H1 (cell line): ENCODE measurements at regions of chr9 and their contacts with region 1.

Region 1: DNA sequence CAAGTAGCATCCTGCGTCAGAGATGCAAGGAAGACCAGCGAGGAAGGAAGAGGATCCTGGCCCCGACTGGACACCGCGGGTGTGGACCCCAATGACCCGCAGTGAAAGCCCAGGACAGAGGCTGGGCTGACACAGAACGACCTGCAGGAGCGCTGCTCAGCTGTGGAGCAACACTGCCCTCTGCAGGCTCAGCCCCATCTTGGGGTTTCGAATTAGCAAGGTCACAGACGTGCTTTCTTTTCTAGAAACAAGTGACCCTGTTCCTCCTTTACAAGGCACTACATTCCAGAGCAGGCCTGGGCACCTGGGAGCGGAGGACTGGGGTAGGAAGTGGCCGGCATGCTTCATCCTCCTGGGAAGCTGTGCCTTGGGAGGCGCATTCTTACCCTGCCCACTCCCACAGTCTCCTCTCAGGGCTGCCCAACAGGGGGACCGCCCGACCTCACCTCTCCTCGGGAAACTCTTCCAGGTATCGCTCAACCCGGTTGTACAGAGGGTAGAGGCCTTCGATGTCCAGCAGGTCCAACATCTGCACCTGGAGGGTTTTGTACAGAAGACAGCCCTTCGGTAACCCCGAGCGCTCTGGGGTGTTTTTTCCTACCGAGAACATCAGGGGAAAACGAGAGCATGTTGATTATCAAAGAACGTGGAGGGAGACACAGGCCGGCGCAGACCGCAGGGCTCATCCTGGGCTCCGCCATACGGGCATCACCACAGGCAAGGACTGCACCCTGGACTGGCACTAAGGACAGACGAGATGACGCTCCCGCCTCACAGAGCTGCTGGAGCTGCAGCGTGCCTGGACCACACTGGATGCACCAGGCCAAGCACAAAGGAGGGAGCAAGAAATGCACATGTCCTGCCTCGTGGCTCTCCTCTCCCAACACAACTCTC is 35.0 kb downstream of the IPPK start:
- DNase-seq: peak; percentile 84 to 96
- H3K4me3 ChIP-seq: no peak overlapping the region
- H3K27ac ChIP-seq: 0 out of 2 replicates have a peak overlapping the region, but pooled peaks have one; percentile 16
- H3K4me1 ChIP-seq: no peaks in the 10 kb centered on the region
- H3K27me3 ChIP-seq: no peaks in the 10 kb centered on the region
- CTCF ChIP-seq: peak; percentile 100
- EP300 ChIP-seq: no peak
- POLR2A ChIP-seq: no peak
- RAD21 ChIP-seq: peak; percentile 98 to 99

Region 2: GRCh38 chr9:92325269-92325990 is 309.5 kb before region 1 on chr9 and contains the starts of genes CENPP and NOL8:
- CTCF ChIA-PET with region 1: interaction called, 13 read pairs
- POLR2A ChIA-PET with region 1: no interaction called
- DNase-seq: peak; percentile 31 to 85
- H3K4me3 ChIP-seq: peak within 1 kb of the TSS; percentile 70 to 97 (median 92)
- H3K27ac ChIP-seq: peak within 1 kb of the TSS; percentile 97
- H3K4me1 ChIP-seq: peaks cover 0 to 4% (median under 1%) of the 10 kb centered on the region in 4 experiments; a peak in 1 of 7 replicates
- H3K27me3 ChIP-seq: no peaks in the 10 kb centered on the region
- CTCF ChIP-seq: no peak
- EP300 ChIP-seq: peak in 1 of 2 experiments; percentile 89; a peak in 1 of 3 replicates
- POLR2A ChIP-seq: peak; percentile 80 to 83; a peak in 2 of 3 replicates
- RAD21 ChIP-seq: no peak
- total RNA-seq, gene CENPP: 9.9 and 10.8 TPM in 2 replicates
- total RNA-seq, gene NOL8: 30.4 and 31.8 TPM in 2 replicates

Region 3: DNA sequence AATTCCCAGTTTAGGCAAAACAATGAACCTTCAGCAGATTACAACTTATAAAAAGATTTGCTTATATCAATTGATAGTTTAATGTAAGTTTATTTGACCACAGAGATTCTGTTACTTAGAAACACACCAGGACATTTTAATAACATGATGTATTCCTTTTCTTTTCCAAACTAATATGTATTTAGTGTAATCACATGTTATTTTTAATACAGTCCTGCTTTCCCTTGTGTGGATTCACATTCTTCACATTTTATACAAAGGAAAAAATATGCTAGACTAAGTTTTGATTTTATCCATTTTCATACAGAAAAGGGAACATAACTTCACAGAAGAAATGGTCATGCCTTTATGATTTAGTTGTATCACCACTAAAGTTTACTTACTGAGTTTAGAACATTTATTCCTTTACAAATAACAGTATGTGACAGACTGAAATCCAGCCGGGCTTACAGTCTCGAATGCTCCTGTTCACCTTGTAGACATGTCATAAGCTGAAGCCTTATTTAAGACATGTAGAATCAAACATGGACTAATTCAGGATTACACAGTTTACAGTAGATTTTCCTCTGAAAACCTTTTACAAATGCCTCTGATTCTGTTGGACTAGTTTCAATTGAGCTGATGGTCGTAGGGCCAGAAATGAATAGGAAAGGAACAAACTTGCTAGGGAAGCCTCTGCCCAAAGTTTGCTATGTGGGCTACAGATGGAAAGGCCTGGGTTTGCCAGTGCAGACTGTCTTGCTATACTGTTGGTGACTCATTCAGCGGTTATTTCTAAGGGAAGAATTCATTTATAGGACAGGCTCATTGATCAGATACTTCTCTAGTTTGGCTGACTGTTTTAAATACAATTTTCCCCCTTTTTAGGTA is 146.0 kb before region 1 on chr9:
- CTCF ChIA-PET with region 1: no interaction called
- POLR2A ChIA-PET with region 1: no interaction called
- DNase-seq: no peak
- H3K4me3 ChIP-seq: no peak overlapping the region
- H3K27ac ChIP-seq: no peak overlapping the region
- H3K4me1 ChIP-seq: no peaks in the 10 kb centered on the region
- H3K27me3 ChIP-seq: no peaks in the 10 kb centered on the region
- CTCF ChIP-seq: no peak
- EP300 ChIP-seq: no peak
- POLR2A ChIP-seq: no peak
- RAD21 ChIP-seq: no peak

Region 4: DNA sequence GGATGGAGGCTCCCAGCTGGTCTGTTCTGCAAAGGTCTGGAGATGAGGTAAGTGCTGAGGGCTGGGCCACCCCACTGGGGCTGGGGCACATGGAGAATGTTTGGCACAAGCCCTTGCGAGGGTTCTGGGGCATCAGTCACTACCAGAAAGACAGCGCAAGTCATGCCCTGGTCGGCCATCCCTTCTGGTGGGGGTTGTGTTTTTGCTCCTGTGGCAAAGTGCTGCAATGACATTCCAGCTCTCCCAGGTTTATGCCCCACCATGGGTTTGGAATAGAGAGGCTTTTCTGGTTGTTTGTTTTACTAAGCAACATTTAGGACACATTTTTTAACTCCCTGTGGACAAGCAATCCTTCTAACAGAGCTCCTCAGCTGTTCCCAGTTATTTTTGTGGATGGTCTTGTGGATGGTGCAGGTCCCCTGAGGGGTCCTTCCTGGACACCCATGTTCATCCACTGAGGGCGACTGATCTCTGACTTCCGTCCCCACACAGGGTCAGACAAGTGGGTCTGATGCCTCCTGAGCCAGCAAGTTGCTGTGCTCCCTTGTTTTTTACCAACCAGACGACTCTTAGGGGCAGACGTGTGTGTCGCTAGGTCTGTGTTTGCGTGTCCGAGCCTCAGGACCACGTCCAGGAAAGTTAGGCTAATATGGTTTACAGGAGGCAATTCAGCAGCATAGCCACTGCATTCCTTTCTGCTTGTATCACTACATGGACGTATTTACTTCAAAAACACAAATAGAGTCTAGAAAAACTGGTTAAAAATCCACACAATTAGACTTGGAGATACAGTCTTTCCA is 34.3 kb before region 1 on chr9:
- CTCF ChIA-PET with region 1: no interaction called
- POLR2A ChIA-PET with region 1: no interaction called
- DNase-seq: no peak
- H3K4me3 ChIP-seq: no peak overlapping the region
- H3K27ac ChIP-seq: no peak overlapping the region
- H3K4me1 ChIP-seq: no peaks in the 10 kb centered on the region
- H3K27me3 ChIP-seq: 0 out of 7 replicates have a peak, but pooled peaks cover 0 to 2% (median 0%) of the 10 kb centered on the region in 4 experiments
- CTCF ChIP-seq: no peak
- EP300 ChIP-seq: no peak
- POLR2A ChIP-seq: no peak
- RAD21 ChIP-seq: no peak

Region 5: GRCh38 chr9:92616655-92617111 is 18.3 kb before region 1 on chr9:
- CTCF ChIA-PET with region 1: interaction called, 12 read pairs
- POLR2A ChIA-PET with region 1: interaction called, 3 read pairs
- DNase-seq: no peak
- H3K4me3 ChIP-seq: no peak overlapping the region
- H3K27ac ChIP-seq: no peak overlapping the region
- H3K4me1 ChIP-seq: no peaks in the 10 kb centered on the region
- H3K27me3 ChIP-seq: no peaks in the 10 kb centered on the region
- CTCF ChIP-seq: no peak
- EP300 ChIP-seq: no peak
- POLR2A ChIP-seq: no peak
- RAD21 ChIP-seq: no peak

Region 6: DNA sequence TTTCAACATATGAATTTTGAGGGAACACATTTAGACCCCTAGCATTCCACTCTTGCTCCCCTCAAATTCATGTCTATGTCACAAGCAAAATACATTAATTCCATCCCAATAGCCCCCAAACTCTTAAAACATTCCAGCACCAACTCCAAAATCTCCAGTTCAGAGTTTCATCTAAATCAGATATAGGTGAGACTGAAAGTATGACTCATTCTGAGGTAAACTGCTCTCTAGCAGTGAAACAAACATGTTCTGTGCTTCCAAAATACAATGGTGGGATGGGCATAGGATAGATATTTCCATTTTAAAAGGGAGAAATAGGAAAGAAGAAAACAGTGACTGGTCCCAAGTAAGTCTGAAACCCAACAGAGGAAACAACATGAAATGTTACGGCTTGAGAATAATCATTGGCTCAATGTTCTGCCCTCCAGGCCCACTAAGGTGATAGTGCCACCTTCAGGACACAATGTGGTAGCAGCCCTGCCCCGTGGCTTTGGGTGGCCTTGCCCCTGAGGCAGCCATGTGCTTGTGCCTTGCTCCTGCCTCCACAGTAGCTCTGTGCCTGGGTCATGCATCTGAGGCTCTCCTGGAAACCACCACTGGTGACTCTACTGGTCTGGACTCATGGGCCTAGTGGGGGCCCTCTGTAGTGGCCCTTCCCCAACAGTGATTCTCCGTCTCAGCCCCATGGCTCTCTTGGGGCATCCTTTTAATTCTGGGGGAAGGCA is 71.4 kb after region 1 on chr9:
- CTCF ChIA-PET with region 1: no interaction called
- POLR2A ChIA-PET with region 1: no interaction called
- DNase-seq: peak in 1 of 2 experiments; percentile 69
- H3K4me3 ChIP-seq: no peak overlapping the region
- H3K27ac ChIP-seq: no peak overlapping the region
- H3K4me1 ChIP-seq: no peaks in the 10 kb centered on the region
- H3K27me3 ChIP-seq: no peaks in the 10 kb centered on the region
- CTCF ChIP-seq: peak; percentile 66 to 92 (median 90)
- EP300 ChIP-seq: no peak
- POLR2A ChIP-seq: no peak
- RAD21 ChIP-seq: peak; percentile 76 to 77